Activated T-helper 2 cell treated with anti-CD3 and anti-CD28 coated beads, Interferon-gamma antibody, Interleukin-2, Interleukin-4, amounts not matched to agents 10 μg/mL and 5 μg/mL and 100 μg/mL, durations not matched to agents 14 hours and 24 hours and 36 hours (primary cell): ENCODE measurements at regions of chr6 and their contacts with region 1.

Region 1: DNA sequence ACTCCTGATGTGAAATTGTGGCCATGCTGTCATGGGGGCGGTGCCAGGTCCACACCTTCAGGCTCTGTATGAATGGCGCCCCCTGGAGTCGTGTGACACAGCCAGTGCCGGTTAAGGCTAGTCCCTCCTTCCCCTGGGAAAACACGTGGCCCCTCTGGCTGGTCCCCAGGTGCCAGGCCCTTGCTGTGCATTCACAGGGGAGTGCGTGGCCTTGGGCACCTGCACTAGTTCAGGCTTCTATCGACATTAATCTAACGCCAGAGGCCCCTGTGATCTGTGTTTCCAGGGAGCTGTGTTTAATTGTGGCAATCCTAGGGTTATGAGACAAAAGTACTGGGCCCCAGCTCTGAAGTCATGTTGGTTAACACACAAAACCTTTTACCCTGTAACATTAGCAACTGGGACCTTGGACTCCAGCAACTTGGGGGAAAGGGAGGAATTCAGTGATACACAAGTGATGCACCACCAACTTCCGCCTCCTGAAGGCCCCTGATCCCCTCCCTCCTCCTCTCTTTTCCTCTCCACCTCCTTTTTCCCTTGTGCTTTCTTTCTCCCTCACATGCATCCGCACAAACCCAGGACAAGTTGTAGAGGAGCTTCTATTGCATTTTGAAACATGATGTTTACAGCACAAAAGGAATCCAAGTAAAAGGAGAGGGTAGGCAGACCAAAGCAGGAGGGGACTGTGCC is 74.0 kb downstream of the SSR1 start:
- DNase-seq: peak; percentile 55
- H3K4me3 Mint-ChIP-seq: no peak overlapping the region
- H3K27ac Mint-ChIP-seq: no peak overlapping the region
- H3K4me1 Mint-ChIP-seq: peaks cover 14% of the 10 kb centered on the region
- H3K27me3 Mint-ChIP-seq: no peaks in the 10 kb centered on the region

Region 2: GRCh38 chr6:6676910-6677441 is 562.1 kb before region 1 on chr6:
- intact Hi-C with region 1: loop called (anchors 1 kb)
- DNase-seq: peak; percentile 75
- H3K4me3 Mint-ChIP-seq: no peak overlapping the region
- H3K27ac Mint-ChIP-seq: no peak overlapping the region
- H3K4me1 Mint-ChIP-seq: peaks cover 15% of the 10 kb centered on the region
- H3K27me3 Mint-ChIP-seq: peaks cover 1% of the 10 kb centered on the region

Region 3: DNA sequence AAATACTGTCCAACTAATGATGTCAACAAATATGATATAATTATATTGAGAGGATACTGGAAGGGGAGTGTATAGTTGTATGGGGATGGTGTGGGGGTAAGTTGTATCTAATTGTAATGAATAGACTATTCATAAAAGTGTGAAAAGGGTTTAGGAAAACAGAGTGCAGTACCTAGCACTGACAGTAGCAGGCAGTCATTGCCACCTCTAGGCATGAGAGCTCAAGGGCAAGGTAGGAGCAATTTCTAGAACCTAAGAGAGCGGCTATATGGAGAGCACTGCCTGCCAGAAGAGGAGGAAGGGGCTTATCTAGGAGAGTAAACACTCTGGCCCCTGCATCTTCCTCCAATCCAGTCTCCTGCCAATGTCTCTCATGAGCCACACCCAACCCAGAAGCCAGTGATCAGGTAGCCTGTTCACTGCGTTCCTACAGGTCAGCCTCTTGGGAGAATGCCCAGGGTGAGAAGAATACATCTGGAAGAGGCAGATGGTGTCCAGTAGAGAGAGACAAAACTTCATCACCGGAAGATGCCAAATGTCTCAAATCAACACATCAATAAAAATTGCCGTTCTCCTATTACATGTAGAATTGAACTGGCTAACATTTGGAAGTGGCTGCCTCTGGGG is 450.5 kb before region 1 on chr6:
- intact Hi-C with region 1: loop called (anchors 5 kb)
- DNase-seq: no peak
- H3K4me3 Mint-ChIP-seq: no peak overlapping the region
- H3K27ac Mint-ChIP-seq: no peak overlapping the region
- H3K4me1 Mint-ChIP-seq: peaks cover 34% of the 10 kb centered on the region
- H3K27me3 Mint-ChIP-seq: peaks cover 2% of the 10 kb centered on the region

Region 4: GRCh38 chr6:7086488-7086887 is 152.6 kb before region 1 on chr6:
- intact Hi-C with region 1: loop called (anchors 2 kb)
- DNase-seq: no peak
- H3K4me3 Mint-ChIP-seq: peak overlapping the region; percentile 73
- H3K27ac Mint-ChIP-seq: no peak overlapping the region
- H3K4me1 Mint-ChIP-seq: peaks cover 28% of the 10 kb centered on the region
- H3K27me3 Mint-ChIP-seq: peaks cover 41% of the 10 kb centered on the region

Region 5: GRCh38 chr6:7137335-7138045 is 101.6 kb before region 1 on chr6:
- intact Hi-C with region 1: loop called (anchors 5 kb)
- DNase-seq: peak; percentile 66
- H3K4me3 Mint-ChIP-seq: peak overlapping the region; percentile 84
- H3K27ac Mint-ChIP-seq: peak overlapping the region; percentile 99
- H3K4me1 Mint-ChIP-seq: peaks cover 63% of the 10 kb centered on the region
- H3K27me3 Mint-ChIP-seq: no peaks in the 10 kb centered on the region